Panc1 (cell line): ENCODE measurements at regions of chr3 and their contacts with region 1.

Region 1: GRCh38 chr3:172332256-172333041 is 115.8 kb downstream of the GHSR start:
- DNase-seq: peak; percentile 64
- ATAC-seq: peak; percentile 92
- H3K4me3 ChIP-seq: no peak overlapping the region
- H3K27ac ChIP-seq: no peak overlapping the region
- H3K4me1 ChIP-seq: no peaks in the 10 kb centered on the region
- H3K27me3 ChIP-seq: no peaks in the 10 kb centered on the region
- CTCF ChIP-seq: peak; percentile 97

Region 2: DNA sequence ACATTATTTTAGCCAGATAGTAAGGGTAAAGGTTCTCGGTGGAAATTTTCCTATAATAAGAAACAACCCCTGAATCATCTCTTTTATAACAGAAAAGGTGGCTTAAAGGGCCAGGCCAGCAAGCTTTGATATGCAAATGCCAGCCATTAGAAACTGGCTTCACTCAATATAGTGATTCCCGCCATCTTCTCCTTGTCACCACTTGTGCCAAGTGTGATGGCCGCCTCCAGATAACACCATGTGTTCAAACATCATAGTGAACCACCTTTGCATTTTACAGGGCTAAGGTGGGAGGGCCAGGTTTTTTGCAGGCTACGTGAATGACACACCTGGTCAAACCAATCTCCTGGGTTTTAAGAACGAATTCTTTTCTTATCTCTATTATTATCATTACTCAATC is 347.1 kb after region 1 on chr3:
- CTCF ChIA-PET with region 1: interaction called, 12 read pairs
- POLR2A ChIA-PET with region 1: no interaction called
- in situ Hi-C with region 1: no loop called
- intact Hi-C with region 1: no loop called
- DNase-seq: no peak
- ATAC-seq: no peak
- H3K4me3 ChIP-seq: no peak overlapping the region
- H3K27ac ChIP-seq: no peak overlapping the region
- H3K4me1 ChIP-seq: peaks cover 20% of the 10 kb centered on the region
- H3K27me3 ChIP-seq: no peaks in the 10 kb centered on the region
- CTCF ChIP-seq: no peak